Dendritic cell treated with granulocyte-macrophage colony-stimulating factor and Interleukin-4, amounts not matched to agents 40 ng/mL and 50 ng/mL, for 4 days (primary cell): ENCODE measurements at regions of chr6 and their contacts with region 1.

Region 1: GRCh38 chr6:29752451-29753308 is 29.4 kb downstream of the HLA-F start:
- H3K4me3 Mint-ChIP-seq: peak overlapping the region; percentile 84
- H3K27ac Mint-ChIP-seq: peak overlapping the region; percentile 92
- H3K4me1 Mint-ChIP-seq: peaks cover 29% of the 10 kb centered on the region
- H3K27me3 Mint-ChIP-seq: peaks cover 15% of the 10 kb centered on the region

Region 2: DNA sequence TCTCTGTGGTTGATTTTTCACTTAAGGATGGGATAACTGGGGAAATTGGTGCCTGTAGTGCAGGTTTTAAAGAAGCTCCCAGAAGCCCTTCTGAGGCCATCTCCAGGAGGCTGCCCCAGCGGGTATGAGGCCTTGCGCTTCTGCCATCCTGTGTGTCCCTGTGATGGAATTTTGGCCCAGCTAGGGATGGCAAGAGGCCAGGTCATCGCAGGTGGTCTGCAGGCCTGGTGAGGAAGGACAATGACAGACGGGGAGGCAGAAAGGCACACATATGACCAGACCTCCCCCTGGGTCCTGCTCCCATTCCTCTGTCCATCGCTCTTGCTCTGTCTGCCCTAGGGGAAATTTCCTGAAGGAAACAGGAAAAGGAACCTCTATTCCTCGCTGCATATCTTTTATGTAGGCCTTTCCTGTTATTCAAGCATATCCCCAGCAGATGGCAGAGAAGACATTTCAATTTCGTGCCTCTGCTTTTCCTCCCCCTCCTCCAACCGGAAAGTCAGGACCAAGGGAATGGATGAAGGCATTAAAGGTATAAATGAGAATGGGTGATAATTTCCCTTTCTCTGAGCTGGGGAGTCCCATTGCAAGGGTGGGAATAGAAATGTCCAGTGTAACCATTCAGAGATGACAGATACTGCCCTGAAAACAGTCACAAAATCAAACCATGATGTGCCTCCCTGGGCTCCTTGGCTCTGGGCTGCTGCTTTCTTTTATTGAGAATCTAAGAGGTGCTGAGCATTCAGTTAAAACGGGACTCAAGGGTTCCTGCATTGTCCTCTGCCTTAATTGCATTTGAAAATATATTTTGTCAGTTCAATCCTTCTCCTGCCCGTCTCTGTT is 47.1 kb before region 1 on chr6:
- intact Hi-C with region 1: loop called (anchors 2 kb)
- H3K4me3 Mint-ChIP-seq: no peak overlapping the region
- H3K27ac Mint-ChIP-seq: no peak overlapping the region
- H3K4me1 Mint-ChIP-seq: peaks cover 6% of the 10 kb centered on the region
- H3K27me3 Mint-ChIP-seq: peaks cover 58% of the 10 kb centered on the region

Region 3: DNA sequence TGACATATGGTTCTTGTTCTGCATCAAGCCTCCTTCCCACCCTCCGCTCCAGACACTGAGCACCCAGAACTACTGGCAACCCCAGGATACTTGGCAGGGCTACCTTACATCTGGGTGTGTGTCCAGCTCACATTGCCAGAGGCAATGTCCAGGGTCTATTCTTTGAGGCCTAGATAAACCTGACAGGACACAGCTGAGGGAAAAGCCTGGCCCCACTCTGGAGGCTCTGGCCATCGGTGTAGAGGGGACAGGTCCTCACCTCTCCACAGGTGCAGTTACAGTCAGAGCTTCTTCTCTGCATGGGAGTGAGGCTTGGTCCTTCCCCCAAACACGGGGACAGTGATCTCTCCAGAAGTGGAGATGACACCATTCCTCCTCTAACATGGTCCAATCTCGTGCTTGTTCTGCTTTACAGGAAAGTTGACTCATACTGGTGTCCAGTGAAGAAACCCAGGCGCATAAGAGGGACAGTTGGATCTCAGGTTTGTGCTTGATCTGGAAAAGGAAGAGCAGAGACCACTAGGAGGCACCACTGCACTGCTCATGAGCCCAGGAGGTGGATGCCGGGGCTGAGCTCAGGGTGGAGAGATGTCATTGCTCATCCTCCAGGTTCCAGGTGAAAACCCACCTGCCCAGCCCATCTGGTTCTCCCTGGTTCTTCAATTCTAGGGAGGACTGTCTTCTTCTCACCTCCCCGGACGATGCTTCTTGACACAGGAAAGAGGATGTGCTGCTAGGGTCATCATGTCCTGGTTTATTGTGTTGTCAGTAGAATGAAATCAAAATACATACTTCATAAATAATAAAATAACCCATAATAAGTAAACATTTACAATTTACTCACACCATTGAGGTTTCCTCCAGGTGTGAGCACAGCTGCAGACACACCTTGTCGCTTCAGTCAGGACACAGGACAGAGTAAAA is 14.7 kb before region 1 on chr6:
- intact Hi-C with region 1: loop called (anchors 2 kb)
- H3K4me3 Mint-ChIP-seq: no peak overlapping the region
- H3K27ac Mint-ChIP-seq: no peak overlapping the region
- H3K4me1 Mint-ChIP-seq: peaks cover 13% of the 10 kb centered on the region
- H3K27me3 Mint-ChIP-seq: no peaks in the 10 kb centered on the region